Activated CD4-positive, alpha-beta memory T cell treated with anti-CD3 and anti-CD28 coated beads for 36 hours (primary cell): ENCODE measurements at regions of chr5 and their contacts with region 1.

Region 1: DNA sequence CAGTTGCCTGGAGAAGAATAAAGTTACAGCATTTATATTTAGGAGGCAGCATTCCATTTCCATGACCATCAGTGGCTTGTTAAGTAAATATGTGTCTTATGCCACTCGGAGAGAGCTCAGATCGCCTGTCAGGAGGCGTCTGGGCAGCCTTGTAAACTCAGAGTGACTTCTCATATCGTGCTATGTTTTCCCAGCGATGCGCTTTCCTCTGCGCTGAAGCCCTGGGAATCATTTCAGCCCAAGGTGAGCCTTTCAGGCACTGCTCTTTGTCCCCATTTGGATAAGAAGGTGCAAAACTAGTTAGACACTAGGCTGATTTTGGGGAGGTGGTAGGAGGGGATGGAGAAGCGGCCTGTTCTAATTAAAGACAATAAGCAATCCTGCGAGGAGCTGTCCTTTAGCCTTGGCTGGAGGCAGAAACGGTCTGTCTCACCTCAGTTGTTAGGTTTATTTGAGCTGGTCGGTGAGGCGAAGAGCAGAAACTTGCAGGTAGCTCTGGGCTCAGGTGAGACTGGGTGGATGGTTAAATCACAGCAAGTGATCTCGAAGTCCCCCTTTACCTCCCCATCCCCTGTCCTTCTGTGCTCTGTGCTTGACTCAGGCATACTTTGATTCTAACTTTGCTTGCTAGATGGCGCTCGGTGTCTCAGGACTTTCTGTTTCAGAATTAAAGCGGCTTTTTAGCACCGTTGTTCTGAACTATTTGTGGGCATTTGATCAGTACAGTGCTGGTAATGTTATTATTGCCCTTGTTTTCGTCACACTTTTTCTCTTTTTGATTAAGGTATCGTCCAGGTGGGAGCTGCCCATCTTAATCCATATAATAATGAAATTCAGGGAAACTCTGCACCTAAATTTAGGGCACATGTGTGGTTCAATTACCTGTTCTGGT is 24.6 kb downstream of the NR2F1 start:
- DNase-seq: no peak
- H3K4me3 Mint-ChIP-seq: peak overlapping the region; percentile 8
- H3K27ac Mint-ChIP-seq: no peak overlapping the region
- H3K4me1 Mint-ChIP-seq: peaks cover 18% of the 10 kb centered on the region
- H3K27me3 Mint-ChIP-seq: peaks cover 82% of the 10 kb centered on the region

Region 2: DNA sequence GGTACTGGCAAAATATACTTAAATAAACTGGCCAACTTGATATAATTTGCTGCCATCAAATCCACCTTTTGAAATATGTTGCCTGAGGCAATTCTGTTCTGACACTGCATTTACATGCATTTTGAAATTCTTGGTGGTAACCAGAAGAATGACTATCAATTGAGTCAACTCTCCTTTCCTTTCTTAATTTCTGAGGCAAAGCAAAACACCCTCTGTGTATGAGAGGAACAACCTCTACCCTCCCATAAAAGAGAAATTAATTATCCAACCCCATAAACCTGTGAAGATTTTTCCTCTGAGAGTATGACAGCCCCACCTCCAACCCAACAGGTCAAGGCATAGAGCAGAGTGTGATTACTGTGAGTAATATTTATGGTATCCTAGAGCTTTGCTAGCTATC is 313.4 kb before region 1 on chr5:
- CTCF ChIA-PET with region 1: no interaction called
- POLR2A ChIA-PET with region 1: no interaction called
- intact Hi-C with region 1: no loop called
- DNase-seq: no peak
- H3K4me3 Mint-ChIP-seq: no peak overlapping the region
- H3K27ac Mint-ChIP-seq: no peak overlapping the region
- H3K4me1 Mint-ChIP-seq: no peaks in the 10 kb centered on the region
- H3K27me3 Mint-ChIP-seq: no peaks in the 10 kb centered on the region

Region 3: GRCh38 chr5:93407454-93407853 is 200.2 kb before region 1 on chr5:
- CTCF ChIA-PET with region 1: no interaction called
- POLR2A ChIA-PET with region 1: no interaction called
- intact Hi-C with region 1: no loop called
- DNase-seq: no peak
- H3K4me3 Mint-ChIP-seq: no peak overlapping the region
- H3K27ac Mint-ChIP-seq: no peak overlapping the region
- H3K4me1 Mint-ChIP-seq: no peaks in the 10 kb centered on the region
- H3K27me3 Mint-ChIP-seq: no peaks in the 10 kb centered on the region

Region 4: DNA sequence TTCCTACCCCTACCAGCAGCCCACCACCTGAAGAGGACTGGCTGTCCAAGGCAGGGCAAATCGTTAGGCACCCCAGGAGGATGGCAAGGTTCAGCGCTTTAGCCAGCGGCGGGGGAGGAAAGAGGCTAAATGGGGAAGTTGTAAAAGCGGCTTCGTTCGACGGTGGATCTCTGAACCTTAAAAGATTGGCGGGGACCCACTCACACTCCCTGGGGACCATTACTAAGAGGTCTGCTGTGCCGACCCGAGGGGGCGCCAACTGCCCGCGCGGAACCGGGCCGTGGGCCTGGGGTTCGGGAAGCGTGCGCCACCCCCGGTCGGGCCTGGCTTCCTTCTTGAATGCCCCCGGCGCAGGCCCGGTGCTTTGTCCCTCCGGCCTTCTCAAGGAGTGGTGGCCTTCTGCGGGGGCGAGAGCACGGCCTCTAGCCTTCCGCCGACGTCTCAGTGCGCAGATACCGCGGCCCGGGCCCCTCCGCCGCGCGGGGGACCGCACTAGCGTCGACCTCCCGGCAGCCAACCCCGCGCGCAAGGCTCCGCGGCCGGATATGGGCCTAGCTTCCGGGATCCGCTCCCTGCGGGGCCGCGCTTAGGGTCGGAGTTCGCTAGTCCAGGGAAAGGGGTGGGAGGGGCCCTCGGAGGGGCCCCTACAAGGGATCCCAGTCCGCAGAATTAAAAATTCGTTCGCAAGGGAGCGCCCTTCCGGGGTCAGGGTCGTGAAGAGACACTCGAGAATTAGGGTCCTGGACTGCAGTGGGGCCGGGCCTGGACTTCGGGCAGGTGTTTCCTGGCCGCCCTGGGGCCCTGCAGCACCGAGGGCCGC is 37.1 kb before region 1 on chr5:
- CTCF ChIA-PET with region 1: no interaction called
- POLR2A ChIA-PET with region 1: no interaction called
- intact Hi-C with region 1: loop called (anchors 2 kb)
- DNase-seq: peak; percentile 20
- H3K4me3 Mint-ChIP-seq: no peak overlapping the region
- H3K27ac Mint-ChIP-seq: no peak overlapping the region
- H3K4me1 Mint-ChIP-seq: peaks cover 19% of the 10 kb centered on the region
- H3K27me3 Mint-ChIP-seq: peaks cover 65% of the 10 kb centered on the region

Region 5: GRCh38 chr5:93620487-93621326 is 13.1 kb after region 1 on chr5:
- CTCF ChIA-PET with region 1: interaction called, 11 read pairs
- POLR2A ChIA-PET with region 1: no interaction called
- intact Hi-C with region 1: no loop called
- DNase-seq: peak; percentile 67
- H3K4me3 Mint-ChIP-seq: peak overlapping the region; percentile 81
- H3K27ac Mint-ChIP-seq: peak overlapping the region; percentile 15
- H3K4me1 Mint-ChIP-seq: peaks cover 32% of the 10 kb centered on the region
- H3K27me3 Mint-ChIP-seq: peaks cover 19% of the 10 kb centered on the region

Region 6: GRCh38 chr5:93681432-93681831 is 73.8 kb after region 1 on chr5:
- CTCF ChIA-PET with region 1: no interaction called
- POLR2A ChIA-PET with region 1: no interaction called
- intact Hi-C with region 1: no loop called
- DNase-seq: no peak
- H3K4me3 Mint-ChIP-seq: no peak overlapping the region
- H3K27ac Mint-ChIP-seq: no peak overlapping the region
- H3K4me1 Mint-ChIP-seq: no peaks in the 10 kb centered on the region
- H3K27me3 Mint-ChIP-seq: no peaks in the 10 kb centered on the region

Region 7: DNA sequence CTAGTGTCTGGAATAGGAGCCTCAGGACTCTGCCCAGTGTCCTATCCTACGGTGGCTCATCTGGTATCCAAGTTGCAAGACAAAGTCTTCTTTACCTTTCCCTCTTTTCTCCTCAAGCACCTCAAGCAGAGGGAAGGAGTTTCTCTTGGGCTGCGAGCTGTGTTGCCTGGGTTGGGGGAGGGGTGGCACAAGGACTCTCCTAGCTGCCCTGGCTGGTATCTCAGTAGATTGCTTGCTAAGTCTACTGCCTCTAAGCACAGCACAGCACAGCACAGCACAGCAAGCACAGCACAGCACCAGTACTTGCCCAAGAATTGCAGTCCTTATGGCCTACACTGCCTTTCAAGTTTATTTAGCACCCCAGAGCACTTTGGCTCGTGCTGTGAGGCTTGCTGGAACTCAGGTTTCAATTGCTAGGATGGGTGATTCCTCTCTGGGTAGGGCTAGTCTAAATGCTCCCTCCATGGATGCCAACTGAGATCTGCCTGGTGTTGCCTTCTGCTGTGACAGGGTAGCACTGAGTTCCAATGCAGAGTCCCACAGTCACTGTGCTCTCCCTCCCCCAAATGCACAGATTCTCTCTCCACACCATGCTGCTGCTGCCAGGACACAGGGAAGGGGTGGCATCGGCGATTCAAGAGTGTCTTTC is 346.9 kb after region 1 on chr5:
- CTCF ChIA-PET with region 1: no interaction called
- POLR2A ChIA-PET with region 1: no interaction called
- intact Hi-C with region 1: no loop called
- DNase-seq: no peak
- H3K4me3 Mint-ChIP-seq: no peak overlapping the region
- H3K27ac Mint-ChIP-seq: no peak overlapping the region
- H3K4me1 Mint-ChIP-seq: no peaks in the 10 kb centered on the region
- H3K27me3 Mint-ChIP-seq: no peaks in the 10 kb centered on the region